ENCODE measurements at regions of chr4 and their contacts with region 1.

Region 1: GRCh38 chr4:75895744-75896314 is 6.4 kb downstream of the PPEF2 start:
- DNase-seq: no peak
- ATAC-seq: peak; percentile 85
- H3K4me3 Mint-ChIP-seq: no peak overlapping the region
- H3K27ac Mint-ChIP-seq: no peak overlapping the region
- H3K4me1 Mint-ChIP-seq: no peaks in the 10 kb centered on the region
- H3K27me3 Mint-ChIP-seq: peaks cover 3% of the 10 kb centered on the region
- CTCF ChIP-seq: peak; percentile 73

Region 2: DNA sequence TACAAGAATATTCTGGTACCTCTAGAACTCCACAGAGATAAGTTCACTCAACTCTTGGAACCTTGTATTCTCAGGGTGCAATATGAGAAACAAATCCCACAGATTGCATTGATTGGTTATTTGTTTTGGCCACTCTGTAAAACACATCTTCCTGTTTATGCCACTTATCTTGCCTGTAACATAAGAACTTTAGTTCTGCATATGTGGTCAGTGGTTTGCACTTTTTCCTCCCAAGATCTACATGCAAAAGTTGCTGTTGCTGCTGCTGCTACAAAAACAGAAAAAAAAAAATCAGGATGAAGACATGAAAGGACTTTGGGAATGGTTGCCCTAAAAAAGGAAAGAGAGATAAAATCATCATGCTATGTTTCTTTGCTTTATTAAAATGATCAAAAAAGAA is 330.3 kb before region 1 on chr4:
- CTCF ChIA-PET with region 1: no interaction called
- POLR2A ChIA-PET with region 1: no interaction called
- DNase-seq: no peak
- ATAC-seq: no peak
- H3K4me3 Mint-ChIP-seq: no peak overlapping the region
- H3K27ac Mint-ChIP-seq: no peak overlapping the region
- H3K4me1 Mint-ChIP-seq: peaks cover 12% of the 10 kb centered on the region
- H3K27me3 Mint-ChIP-seq: peaks cover 7% of the 10 kb centered on the region
- CTCF ChIP-seq: no peak

Region 3: DNA sequence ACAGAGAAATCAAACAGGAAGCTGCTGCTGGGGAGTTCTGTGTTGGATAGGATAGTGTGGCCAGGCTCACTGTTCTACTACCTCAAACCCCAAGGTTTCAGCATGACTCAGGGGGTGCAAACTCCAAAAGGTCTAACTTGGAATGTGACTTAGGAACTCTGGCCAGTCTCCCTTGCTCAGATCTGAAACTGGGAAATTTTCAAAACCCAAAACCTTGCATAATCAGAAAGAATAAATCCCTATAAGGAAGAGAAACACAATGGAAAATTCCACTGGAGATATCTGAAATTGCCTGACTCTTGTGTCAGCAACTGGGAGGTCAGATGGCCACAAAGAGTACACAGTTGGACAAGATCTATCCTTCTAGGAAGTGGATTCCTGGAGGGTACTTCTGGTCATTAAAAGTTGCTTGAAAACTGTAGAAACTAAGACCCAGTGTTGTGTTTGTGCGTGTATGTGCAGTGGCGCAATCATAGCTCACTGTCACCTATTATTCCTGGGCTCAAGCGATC is 51.6 kb before region 1 on chr4:
- CTCF ChIA-PET with region 1: interaction called, 16 read pairs
- POLR2A ChIA-PET with region 1: no interaction called
- DNase-seq: no peak
- ATAC-seq: no peak
- H3K4me3 Mint-ChIP-seq: no peak overlapping the region
- H3K27ac Mint-ChIP-seq: no peak overlapping the region
- H3K4me1 Mint-ChIP-seq: peaks cover 24% of the 10 kb centered on the region
- H3K27me3 Mint-ChIP-seq: no peaks in the 10 kb centered on the region
- CTCF ChIP-seq: no peak

Region 4: DNA sequence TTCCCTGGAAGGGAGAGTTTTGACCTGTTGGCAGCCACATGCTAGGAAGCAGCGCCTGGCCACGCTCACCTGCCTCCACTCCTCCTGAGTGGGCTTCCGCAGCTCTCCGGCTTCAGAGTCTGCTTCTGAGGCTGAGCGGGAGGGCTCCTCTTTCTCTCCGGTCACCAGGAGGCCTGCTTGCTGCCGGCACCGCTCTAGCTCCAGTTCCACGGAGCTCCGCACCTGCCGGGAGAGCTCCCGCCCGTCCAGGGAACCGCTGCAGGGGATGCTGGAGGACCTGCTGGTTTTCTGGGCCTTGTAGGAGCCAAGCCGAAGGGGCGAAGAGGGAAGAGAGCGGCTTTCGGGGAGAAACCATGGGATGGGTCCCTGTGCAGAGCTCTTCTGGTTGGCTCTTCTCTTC is 19.6 kb before region 1 on chr4:
- CTCF ChIA-PET with region 1: interaction called, 13 read pairs
- POLR2A ChIA-PET with region 1: no interaction called
- DNase-seq: peak; percentile 13
- ATAC-seq: no peak
- H3K4me3 Mint-ChIP-seq: no peak overlapping the region
- H3K27ac Mint-ChIP-seq: no peak overlapping the region
- H3K4me1 Mint-ChIP-seq: peaks cover 8% of the 10 kb centered on the region
- H3K27me3 Mint-ChIP-seq: no peaks in the 10 kb centered on the region; the same call in 1 of the 2 replicates
- CTCF ChIP-seq: no peak

Region 5: DNA sequence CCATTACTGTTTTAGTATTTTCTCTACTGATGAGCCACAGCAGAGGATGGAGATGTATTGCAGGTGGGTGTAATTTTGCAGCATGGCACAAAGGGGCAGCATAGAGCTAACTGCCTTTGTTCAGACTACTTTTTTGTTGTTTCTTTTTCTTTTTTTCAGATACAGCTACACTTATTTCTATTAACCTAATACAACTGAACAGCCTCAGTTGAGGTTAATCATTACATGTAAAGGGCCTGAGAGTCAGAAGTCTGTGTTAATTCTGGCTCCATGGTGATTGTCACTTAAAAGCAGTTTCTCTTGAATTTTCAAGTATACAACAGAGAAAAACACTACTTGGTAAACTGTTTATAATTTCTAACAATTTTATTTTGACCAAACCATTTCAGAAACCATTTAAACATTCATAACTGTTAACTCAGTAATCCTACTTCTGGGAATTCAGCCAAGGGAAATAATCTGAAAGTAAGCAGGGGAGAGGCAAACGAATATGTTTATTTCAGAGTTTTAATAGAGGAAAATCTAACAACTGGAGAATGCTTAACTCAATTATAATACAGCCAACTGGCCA is 20.3 kb after region 1 on chr4:
- CTCF ChIA-PET with region 1: interaction called, 54 read pairs
- POLR2A ChIA-PET with region 1: no interaction called
- DNase-seq: no peak
- ATAC-seq: peak; percentile 94
- H3K4me3 Mint-ChIP-seq: no peak overlapping the region
- H3K27ac Mint-ChIP-seq: no peak overlapping the region
- H3K4me1 Mint-ChIP-seq: peaks cover 16% of the 10 kb centered on the region
- H3K27me3 Mint-ChIP-seq: no peaks in the 10 kb centered on the region
- CTCF ChIP-seq: peak; percentile 72

Region 6: DNA sequence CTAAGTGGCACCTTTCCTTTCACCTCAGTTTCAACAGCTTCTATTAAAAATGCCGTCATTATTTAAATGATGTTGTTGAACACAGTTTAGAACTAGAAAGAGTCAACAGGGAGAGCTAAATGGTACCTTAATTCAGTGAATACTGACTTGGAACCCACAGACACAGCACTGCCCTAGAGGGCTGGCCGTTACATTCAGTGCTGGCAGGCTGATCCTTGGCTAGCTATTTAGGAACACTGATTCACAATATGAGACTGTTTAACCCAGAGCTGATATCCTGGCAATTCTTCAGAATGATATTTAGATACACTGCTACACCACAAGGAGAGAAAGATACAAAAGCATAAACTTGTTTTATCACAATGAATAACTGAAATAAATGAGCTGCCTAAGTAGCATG is 57.7 kb after region 1 on chr4:
- CTCF ChIA-PET with region 1: interaction called, 10 read pairs
- POLR2A ChIA-PET with region 1: no interaction called
- DNase-seq: no peak
- ATAC-seq: no peak
- H3K4me3 Mint-ChIP-seq: no peak overlapping the region
- H3K27ac Mint-ChIP-seq: no peak overlapping the region
- H3K4me1 Mint-ChIP-seq: no peaks in the 10 kb centered on the region
- H3K27me3 Mint-ChIP-seq: no peaks in the 10 kb centered on the region
- CTCF ChIP-seq: no peak

Region 7: DNA sequence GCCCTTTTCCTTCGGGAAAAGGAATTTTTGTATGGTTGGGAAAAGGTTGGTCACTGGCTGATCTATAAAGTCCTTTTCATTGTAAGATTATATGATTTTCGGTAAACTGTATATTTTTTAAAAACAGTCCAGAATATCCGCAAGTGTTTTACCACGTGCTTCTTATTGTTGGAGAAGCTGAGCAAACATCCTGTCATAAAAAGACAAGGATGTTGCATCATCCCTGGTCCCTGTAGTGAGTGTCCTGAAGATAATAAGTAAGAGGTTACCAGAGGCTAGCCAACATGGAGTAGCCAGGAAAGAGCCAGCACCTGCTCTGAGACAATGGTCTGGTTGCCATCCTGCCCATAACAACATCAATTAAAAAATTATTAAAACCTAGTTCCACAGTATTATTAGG is 106.3 kb after region 1 on chr4:
- CTCF ChIA-PET with region 1: no interaction called
- POLR2A ChIA-PET with region 1: no interaction called
- DNase-seq: no peak
- ATAC-seq: no peak
- H3K4me3 Mint-ChIP-seq: no peak overlapping the region
- H3K27ac Mint-ChIP-seq: no peak overlapping the region
- H3K4me1 Mint-ChIP-seq: no peaks in the 10 kb centered on the region
- H3K27me3 Mint-ChIP-seq: peaks cover 4% of the 10 kb centered on the region
- CTCF ChIP-seq: no peak

Region 8: DNA sequence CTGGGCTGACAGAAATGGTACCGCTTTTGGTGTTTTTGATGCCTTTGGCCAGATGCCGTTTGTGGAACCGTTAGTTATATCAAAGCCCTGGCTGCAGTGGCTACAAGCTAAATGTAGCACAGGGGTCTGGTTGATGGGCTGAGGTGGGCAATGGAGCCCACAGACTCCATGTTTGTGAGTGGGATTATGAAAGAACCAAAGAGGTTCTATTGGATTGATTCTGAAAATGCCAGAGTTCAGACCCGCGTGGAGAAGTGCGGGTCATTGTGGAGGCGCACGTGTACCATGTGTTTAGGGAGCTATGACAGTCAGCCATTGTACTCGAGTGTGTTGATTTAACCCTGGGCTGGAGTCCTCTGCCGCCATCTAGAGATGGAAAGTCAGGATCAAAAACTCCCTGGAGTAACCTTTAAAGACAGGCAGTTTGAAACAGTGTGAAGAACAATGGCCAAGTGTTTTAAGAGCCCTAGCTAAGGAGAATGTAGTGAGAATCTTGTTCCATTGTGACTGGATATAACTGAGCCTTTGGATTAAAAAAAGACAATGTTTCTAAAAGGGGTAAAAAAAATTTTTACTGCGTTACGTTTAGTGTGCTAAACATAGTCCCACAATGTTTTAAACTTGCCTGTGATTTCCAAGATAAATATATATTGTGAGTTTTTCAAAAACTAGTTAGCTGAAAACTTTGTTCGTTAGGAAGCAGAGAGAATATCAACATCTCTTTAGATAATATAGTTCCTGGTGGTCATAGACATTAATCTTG is 191.4 kb after region 1 on chr4:
- CTCF ChIA-PET with region 1: interaction called, 18 read pairs
- POLR2A ChIA-PET with region 1: no interaction called
- DNase-seq: peak; percentile 56
- ATAC-seq: peak; percentile 99
- H3K4me3 Mint-ChIP-seq: peak overlapping the region; percentile 42
- H3K27ac Mint-ChIP-seq: no peak overlapping the region
- H3K4me1 Mint-ChIP-seq: peaks cover 6% of the 10 kb centered on the region
- H3K27me3 Mint-ChIP-seq: no peaks in the 10 kb centered on the region
- CTCF ChIP-seq: no peak

Measured in WTC11 (cell line).